Tibial artery (tissue), 4 donors: ENCODE measurements at regions of chr5 and their contacts with region 1.

Region 1: DNA sequence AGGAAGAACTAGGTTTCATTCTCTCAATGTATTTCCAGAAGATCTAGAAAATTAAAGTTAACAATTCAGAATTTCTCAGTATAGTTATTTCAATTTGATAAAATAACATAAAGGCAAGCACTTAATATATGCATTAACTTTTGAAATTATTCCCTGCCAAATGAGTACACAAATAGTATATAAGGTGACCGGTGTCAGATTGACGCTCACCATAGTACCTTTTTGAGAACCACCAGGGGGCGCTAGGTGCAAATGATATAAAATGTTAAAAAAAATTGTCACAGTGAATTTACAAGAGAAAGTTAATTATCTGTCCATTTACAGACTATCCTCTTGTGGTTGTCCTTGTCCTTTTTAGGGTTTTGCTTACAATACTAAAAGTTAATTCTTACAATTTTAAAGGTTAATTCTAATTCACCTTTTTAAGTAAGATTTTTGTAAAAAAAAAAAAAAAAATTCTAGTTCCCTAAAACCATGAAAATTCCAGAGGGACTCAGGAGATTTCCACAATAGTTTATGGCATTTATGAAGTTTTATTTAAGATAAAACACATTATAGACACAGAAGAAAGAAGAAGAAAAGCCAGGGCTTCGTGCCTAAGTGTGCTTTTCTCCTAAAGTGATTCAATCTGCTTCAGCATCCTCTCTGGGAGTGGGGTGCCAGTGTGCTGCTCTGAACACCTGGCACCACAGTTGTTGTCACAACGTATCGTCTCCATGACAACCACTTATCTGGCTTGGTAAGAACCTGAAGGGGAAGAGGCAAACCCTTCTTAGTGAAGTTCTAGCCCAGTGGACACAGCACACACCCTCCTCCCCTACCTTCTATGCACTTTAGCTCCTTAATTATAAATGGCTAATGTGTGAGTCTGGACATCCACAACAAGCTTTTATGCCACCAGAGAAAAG is 1.7 kb downstream of the ADAMTS16 start:
- DNase-seq: peak in 1 of 2 donors; percentile 40
- H3K4me3 ChIP-seq: no peak overlapping the region
- H3K27ac ChIP-seq: no peak overlapping the region
- H3K4me1 ChIP-seq: peaks cover 0 to 22% (median 20%) of the 10 kb centered on the region in 4 donors
- H3K27me3 ChIP-seq: peaks cover 0 to 30% of the 10 kb centered on the region in 2 donors
- CTCF ChIP-seq: peak; percentile 69 to 83

Region 2: GRCh38 chr5:4674166-4674565 is 467.7 kb before region 1 on chr5:
- intact Hi-C with region 1: no loop called
- DNase-seq: no peak
- H3K4me3 ChIP-seq: no peak overlapping the region
- H3K27ac ChIP-seq: no peak overlapping the region
- H3K4me1 ChIP-seq: no peaks in the 10 kb centered on the region
- H3K27me3 ChIP-seq: no peaks in the 10 kb centered on the region
- CTCF ChIP-seq: no peak

Region 3: DNA sequence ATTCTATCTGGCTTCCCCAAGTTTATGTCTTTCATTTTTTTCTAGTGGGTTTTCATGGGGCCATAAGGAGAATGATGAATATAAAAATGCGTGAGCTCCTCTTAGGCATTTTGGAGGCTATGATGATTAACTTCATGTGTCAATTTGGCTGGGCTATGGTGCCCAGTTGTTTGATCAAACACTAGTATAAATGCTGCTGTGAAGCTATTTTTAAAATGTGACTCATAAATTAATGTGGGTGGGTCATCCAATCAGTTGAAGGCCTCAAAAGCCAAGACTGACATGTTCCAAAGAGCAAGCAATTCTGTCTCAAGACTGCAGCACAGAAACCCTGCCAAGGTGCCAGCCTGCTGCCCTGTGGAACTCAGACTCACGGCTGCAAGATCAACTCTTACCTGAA is 256.2 kb after region 1 on chr5:
- intact Hi-C with region 1: loop called (anchors 5 kb)
- DNase-seq: no peak
- H3K4me3 ChIP-seq: no peak overlapping the region
- H3K27ac ChIP-seq: no peak overlapping the region
- H3K4me1 ChIP-seq: no peaks in the 10 kb centered on the region
- H3K27me3 ChIP-seq: no peaks in the 10 kb centered on the region
- CTCF ChIP-seq: no peak

Region 4: DNA sequence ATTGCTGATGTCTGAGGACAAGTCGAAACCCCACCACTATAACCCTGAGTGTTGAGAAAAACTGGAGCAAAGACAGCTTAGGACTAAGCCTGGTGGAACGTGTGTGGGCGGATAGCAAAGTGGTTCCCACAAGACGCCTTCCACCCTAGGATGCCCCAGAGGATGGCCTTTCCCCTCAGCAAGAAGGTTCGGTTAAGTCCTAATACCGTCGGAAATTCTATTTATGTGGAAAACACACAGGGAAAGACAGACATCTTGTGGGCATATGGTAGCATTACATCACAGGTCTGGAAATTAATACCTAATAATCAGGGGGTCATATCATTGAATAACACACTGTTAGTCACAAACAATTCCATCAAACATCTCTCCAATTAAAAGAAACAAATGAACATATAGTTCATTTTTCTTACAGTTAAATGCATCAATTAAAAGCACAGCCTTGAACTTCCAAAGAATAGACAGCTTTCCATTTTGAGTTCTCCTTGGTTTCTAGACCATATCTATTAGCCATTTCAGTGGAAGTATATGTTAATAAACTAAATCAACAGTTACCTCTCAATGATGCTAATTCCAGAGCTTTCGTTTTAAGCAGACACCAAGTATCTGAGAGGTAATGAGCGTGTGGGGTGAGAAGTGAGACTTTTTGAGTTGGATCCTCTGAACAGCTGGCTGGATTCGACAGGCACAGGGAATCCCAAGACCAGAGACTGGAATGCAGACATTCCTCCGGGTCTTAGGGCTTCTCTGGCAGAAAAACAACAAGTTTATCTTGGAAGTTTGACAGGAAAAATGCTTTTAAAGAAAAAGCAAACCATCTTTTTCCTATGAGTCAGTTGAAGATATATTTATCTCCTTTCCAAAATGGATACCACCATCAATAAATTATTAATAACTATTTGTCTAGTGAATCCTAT is 277.7 kb after region 1 on chr5:
- intact Hi-C with region 1: loop called (anchors 2 kb)
- DNase-seq: no peak
- H3K4me3 ChIP-seq: no peak overlapping the region
- H3K27ac ChIP-seq: no peak overlapping the region
- H3K4me1 ChIP-seq: peaks cover 0 to 29% (median 19%) of the 10 kb centered on the region in 4 donors
- H3K27me3 ChIP-seq: no peaks in the 10 kb centered on the region
- CTCF ChIP-seq: peak; percentile 77 to 79